AG04449 (cell line): ENCODE measurements at regions of chr2 and their contacts with region 1.

Region 1: DNA sequence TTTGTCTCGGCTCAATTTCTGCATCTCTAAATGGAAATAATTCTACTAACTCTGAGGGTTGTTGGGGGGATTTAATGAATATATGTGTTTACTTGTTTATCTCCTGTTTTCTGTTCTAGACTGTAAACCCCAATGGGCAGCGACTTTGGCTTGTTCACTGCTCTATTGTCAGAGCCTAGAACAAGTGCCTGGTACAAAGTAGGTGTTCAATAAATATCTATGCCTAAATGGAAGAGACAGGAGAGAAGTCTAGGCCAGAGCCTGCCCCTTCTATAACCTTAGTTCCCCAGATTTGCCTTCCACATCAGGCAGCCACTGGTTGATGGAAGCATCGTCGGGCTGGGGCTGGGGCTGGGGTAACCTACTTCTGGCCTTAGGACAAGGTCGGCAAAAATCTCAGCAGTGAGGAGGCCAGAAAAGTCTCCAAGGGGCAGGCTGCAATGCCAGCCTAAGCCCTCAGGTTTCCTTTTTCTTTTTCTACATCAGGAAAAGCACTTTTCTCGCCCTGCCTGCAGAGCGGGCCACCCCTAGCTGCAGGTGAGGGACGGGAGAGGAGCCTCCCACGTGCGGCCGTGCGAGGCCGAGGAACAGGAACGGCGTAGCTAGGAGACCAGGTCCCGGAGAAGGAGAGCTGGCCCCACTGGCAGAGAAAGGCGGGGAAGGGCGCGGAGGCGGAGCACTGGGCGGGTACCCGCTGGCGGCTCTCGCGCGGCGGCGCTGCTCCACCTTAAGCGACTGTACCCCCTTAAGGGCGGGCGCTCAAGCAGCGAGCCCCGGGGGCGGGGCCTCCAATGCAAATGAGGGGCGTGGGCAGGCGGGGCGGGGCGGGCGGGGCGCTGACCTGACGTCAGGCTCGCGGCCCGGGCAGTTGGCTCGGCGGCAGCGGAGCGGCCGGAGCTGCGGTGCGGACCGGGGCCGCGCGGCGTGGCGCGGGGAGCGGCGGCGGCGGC is at the start of gene CNNM4:
- DNase-seq: peak; percentile 38
- H3K4me3 ChIP-seq: peak within 1 kb of the TSS; percentile 75
- CTCF ChIP-seq: peak; percentile 26

Region 2: DNA sequence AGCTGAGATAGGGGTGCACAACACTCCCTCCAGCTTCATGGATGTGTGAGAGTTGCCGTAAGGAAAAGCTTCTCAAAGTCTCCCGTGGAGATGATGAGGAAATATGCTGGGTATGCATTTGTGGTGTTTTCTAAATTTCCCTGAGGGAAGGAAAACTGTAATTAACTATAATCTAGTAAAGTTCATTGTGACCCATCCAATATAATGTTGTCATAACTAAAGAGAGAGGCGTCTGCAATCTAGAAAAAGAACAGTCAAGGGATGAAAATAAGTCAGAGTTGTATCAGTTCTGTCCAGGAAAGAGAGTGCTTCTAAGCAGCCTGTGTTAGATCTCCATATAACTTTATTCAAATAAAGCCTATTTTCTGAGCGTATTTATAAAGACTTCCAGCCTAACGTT is 13.2 kb before region 1 on chr2:
- CTCF ChIA-PET with region 1: interaction called, 19 read pairs
- POLR2A ChIA-PET with region 1: interaction called, 3 read pairs
- DNase-seq: no peak
- H3K4me3 ChIP-seq: no peak overlapping the region
- CTCF ChIP-seq: no peak

Region 3: GRCh38 chr2:96773922-96774321 is 13.6 kb after region 1 on chr2:
- CTCF ChIA-PET with region 1: interaction called, 94 read pairs
- POLR2A ChIA-PET with region 1: interaction called, 4 read pairs
- DNase-seq: no peak
- H3K4me3 ChIP-seq: no peak overlapping the region
- CTCF ChIP-seq: no peak

Region 4: GRCh38 chr2:96783388-96783787 is 23.1 kb after region 1 on chr2:
- CTCF ChIA-PET with region 1: interaction called, 94 read pairs
- POLR2A ChIA-PET with region 1: interaction called, 4 read pairs
- DNase-seq: no peak
- H3K4me3 ChIP-seq: no peak overlapping the region
- CTCF ChIP-seq: no peak

Region 5: DNA sequence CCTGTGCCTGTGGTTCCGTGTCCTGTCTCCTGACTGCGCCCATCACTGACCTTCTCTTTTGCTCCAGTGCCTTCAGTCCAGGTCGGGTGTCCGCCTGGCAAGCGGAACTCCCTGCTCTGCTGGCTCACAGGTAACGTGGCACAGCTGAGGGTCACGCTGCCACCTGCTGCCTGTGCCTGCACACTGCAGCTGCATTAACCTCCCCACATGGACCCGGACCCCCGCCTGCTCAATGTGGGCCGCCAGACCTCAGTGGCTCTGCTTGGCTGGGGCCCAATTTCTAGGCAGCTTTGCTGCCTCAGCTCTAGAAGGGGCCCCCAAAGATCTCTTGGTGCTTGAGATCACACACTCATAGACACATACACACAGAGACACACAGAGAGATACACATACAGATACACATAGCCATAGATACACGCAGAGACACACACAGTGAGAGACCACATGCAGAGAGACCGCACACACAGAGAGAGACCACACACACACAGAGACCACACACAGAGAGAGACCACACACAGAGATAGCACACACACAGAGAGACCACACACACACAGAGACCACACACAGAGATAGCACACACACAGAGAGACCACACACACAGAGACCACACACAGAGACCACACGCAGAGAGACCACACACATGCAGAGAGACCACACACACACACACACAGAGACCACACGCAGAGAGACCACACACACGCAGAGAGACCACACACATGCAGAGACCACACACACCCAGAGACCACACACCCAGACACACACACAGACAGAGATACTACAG is 40.9 kb after region 1 on chr2:
- CTCF ChIA-PET with region 1: interaction called, 10 read pairs
- POLR2A ChIA-PET with region 1: no interaction called
- DNase-seq: no peak
- H3K4me3 ChIP-seq: no peak overlapping the region
- CTCF ChIP-seq: peak; percentile 93